HCT116 (cell line): ENCODE measurements at regions of chr17 and their contacts with region 1.

Region 1: GRCh38 chr17:10226930-10227685 is 28.7 kb upstream of the GAS7 start:
- DNase-seq: peak; percentile 23
- ATAC-seq: peak; percentile 99
- H3K4me3 ChIP-seq: no peak overlapping the region
- H3K27ac ChIP-seq: no peak overlapping the region
- H3K4me1 ChIP-seq: no peaks in the 10 kb centered on the region
- H3K27me3 ChIP-seq: no peaks in the 10 kb centered on the region
- CTCF ChIP-seq: peak; percentile 83 to 98 (median 94); a peak in 5 of 6 replicates
- POLR2A ChIP-seq: no peak
- RAD21 ChIP-seq: peak; percentile 92

Region 2: DNA sequence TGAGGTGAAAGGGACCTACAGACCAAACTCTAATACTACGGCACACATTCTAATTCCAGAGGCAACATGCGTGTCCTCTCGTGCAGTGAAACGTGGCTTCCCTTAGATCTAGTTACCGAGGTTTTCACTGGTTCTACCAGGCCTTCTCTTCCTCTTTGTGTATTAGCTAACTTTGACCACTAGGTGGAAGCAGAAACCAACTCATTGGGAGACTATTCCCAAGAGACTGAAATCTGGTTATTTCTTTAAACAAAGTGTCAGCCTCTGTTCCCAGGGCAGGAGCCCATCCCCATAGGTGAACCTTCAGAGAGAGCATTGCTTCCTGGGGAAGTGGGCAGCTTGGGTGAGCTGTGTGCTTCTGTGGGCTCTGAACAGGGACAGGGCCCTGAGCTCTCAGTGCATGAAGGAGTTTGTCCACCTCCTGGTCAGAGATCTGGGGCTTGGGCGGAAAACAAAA is 302.3 kb before region 1 on chr17:
- CTCF ChIA-PET with region 1: interaction called, 4 read pairs
- POLR2A ChIA-PET with region 1: no interaction called
- RAD21 ChIA-PET with region 1: no interaction called
- intact Hi-C with region 1: loop called (anchors 5 kb)
- DNase-seq: peak; percentile 81
- ATAC-seq: peak; percentile 80
- H3K4me3 ChIP-seq: no peak overlapping the region
- H3K27ac ChIP-seq: no peak overlapping the region
- H3K4me1 ChIP-seq: peaks cover 6 to 21% of the 10 kb centered on the region in 2 experiments
- H3K27me3 ChIP-seq: 0 out of 2 replicates have a peak, but pooled peaks cover 1% of the 10 kb centered on the region
- CTCF ChIP-seq: peak; percentile 78 to 86 (median 80)
- POLR2A ChIP-seq: no peak
- RAD21 ChIP-seq: peak; percentile 88

Region 3: GRCh38 chr17:9968902-9969617 is 258.0 kb before region 1 on chr17:
- CTCF ChIA-PET with region 1: interaction called, 9 read pairs
- POLR2A ChIA-PET with region 1: no interaction called
- RAD21 ChIA-PET with region 1: interaction called in 1 of 2 experiments, 4 read pairs
- intact Hi-C with region 1: loop called (anchors 1 kb)
- DNase-seq: no peak
- ATAC-seq: no peak
- H3K4me3 ChIP-seq: no peak overlapping the region
- H3K27ac ChIP-seq: no peak overlapping the region
- H3K4me1 ChIP-seq: peaks cover 8 to 9% of the 10 kb centered on the region in 2 experiments
- H3K27me3 ChIP-seq: no peaks in the 10 kb centered on the region
- CTCF ChIP-seq: no peak
- POLR2A ChIP-seq: no peak
- RAD21 ChIP-seq: no peak

Region 4: DNA sequence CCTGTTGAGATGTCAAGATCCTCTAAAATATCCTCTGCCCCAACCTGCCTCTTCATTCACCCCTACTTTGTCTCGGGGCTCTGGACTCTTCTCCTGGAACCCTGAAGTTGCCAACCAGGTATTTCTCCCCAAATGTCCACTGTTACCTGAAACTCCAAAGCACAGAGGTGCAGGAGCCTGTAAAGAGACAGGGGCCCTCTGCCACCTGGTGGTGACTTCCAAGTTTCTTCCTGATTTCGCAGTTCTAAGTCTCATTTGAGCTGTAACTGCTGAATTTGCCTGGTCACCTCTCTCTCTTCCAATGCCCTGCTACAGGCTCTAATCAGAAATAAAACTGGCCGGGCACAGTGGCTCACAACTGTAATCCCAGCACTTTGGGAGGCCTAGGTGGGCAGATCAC is 244.9 kb before region 1 on chr17:
- CTCF ChIA-PET with region 1: interaction called, 16 read pairs
- POLR2A ChIA-PET with region 1: no interaction called
- RAD21 ChIA-PET with region 1: interaction called in 1 of 2 experiments, 3 read pairs
- intact Hi-C with region 1: loop called (anchors 2 kb)
- DNase-seq: peak; percentile 27
- ATAC-seq: peak; percentile 88
- H3K4me3 ChIP-seq: no peak overlapping the region
- H3K27ac ChIP-seq: no peak overlapping the region
- H3K4me1 ChIP-seq: no peaks in the 10 kb centered on the region
- H3K27me3 ChIP-seq: no peaks in the 10 kb centered on the region
- CTCF ChIP-seq: peak; percentile 43 to 60 (median 52); a peak in 5 of 6 replicates
- POLR2A ChIP-seq: no peak
- RAD21 ChIP-seq: peak; percentile 50

Region 5: DNA sequence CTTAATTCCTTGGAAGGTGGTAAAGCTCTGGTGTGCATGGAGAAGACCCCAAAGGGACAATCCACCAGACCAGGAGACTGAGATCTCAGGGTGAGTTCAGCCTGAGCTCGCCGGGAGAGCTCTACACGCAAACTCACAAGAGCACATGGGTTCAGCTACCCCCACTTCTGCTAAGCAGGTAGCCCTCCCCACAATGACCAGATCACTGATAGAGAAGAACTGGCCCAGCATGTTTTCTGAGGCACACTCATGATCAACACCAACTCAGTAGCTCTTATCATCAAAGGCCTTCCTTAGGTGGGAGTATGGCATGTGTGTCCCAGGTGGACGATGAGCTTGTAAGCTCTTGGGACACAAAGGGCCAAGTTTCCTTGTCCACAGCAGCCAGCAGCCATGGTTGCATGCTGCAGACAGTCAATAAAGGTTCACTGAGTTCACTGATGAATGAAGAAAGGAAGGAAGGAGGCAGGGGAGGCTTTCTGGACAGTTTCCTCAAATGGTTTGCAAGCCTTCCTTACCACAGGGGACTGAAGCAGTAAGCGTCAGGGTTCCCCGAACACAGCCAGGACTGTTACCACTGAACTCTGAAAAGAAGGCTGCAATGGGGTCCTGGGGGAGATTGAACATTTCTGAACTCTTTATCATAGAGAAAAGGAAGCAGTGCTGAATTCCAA is 139.9 kb before region 1 on chr17:
- CTCF ChIA-PET with region 1: no interaction called
- POLR2A ChIA-PET with region 1: no interaction called
- RAD21 ChIA-PET with region 1: no interaction called
- intact Hi-C with region 1: loop called (anchors 10 kb)
- DNase-seq: no peak
- ATAC-seq: no peak
- H3K4me3 ChIP-seq: no peak overlapping the region
- H3K27ac ChIP-seq: no peak overlapping the region
- H3K4me1 ChIP-seq: peaks cover 10 to 24% of the 10 kb centered on the region in 2 experiments
- H3K27me3 ChIP-seq: peaks cover 11% of the 10 kb centered on the region; the same call in 1 of the 2 replicates
- CTCF ChIP-seq: no peak
- POLR2A ChIP-seq: no peak
- RAD21 ChIP-seq: no peak

Region 6: GRCh38 chr17:10210151-10210930 is 16.8 kb before region 1 on chr17:
- CTCF ChIA-PET with region 1: interaction called, 11 read pairs
- POLR2A ChIA-PET with region 1: no interaction called
- RAD21 ChIA-PET with region 1: no interaction called
- intact Hi-C with region 1: no loop called
- DNase-seq: no peak
- ATAC-seq: no peak; the same call in 1 of the 2 replicates
- H3K4me3 ChIP-seq: no peak overlapping the region
- H3K27ac ChIP-seq: no peak overlapping the region
- H3K4me1 ChIP-seq: peaks cover 5 to 7% of the 10 kb centered on the region in 2 experiments; a peak in 2 of 4 replicates
- H3K27me3 ChIP-seq: no peaks in the 10 kb centered on the region
- CTCF ChIP-seq: no peak
- POLR2A ChIP-seq: no peak
- RAD21 ChIP-seq: no peak

Region 7: DNA sequence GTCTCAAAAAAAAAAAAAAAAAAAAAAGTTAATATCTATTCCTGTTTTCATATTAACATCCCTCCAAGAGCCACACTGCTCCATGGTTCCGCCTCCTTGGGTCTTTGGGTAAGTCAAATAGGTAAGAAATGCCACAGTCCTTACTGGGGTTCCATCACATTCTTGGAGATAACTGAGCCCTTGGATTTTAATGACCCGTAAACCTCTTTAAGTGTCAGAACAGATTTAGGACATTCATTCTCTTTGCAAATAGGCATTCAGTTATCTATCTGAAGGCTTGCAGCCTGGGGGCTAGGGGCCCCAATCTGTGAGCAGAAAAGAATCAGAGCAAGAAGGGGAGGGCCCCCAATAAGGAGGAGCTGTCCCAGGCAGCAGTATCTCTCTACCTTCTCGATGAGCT is 117.7 kb after region 1 on chr17:
- CTCF ChIA-PET with region 1: no interaction called
- POLR2A ChIA-PET with region 1: no interaction called
- RAD21 ChIA-PET with region 1: no interaction called
- intact Hi-C with region 1: no loop called
- DNase-seq: no peak
- ATAC-seq: no peak
- H3K4me3 ChIP-seq: no peak overlapping the region
- H3K27ac ChIP-seq: no peak overlapping the region
- H3K4me1 ChIP-seq: no peaks in the 10 kb centered on the region
- H3K27me3 ChIP-seq: no peaks in the 10 kb centered on the region
- CTCF ChIP-seq: no peak
- POLR2A ChIP-seq: no peak
- RAD21 ChIP-seq: no peak